ENCODE measurements at regions of chr2 and their contacts with region 1.

Region 1: GRCh38 chr2:105521205-105521604 is 122.4 kb upstream of the FHL2 start:
- DNase-seq: peak; percentile 46
- H3K4me3 ChIP-seq: no peak overlapping the region
- H3K27ac ChIP-seq: no peak overlapping the region
- H3K4me1 ChIP-seq: peaks cover 0 to 15% of the 10 kb centered on the region in 2 experiments; a peak in 1 of 4 replicates
- H3K27me3 ChIP-seq: no peaks in the 10 kb centered on the region
- CTCF ChIP-seq: peak; percentile 74
- EP300 ChIP-seq: no peak
- RAD21 ChIP-seq: peak; percentile 88

Region 2: DNA sequence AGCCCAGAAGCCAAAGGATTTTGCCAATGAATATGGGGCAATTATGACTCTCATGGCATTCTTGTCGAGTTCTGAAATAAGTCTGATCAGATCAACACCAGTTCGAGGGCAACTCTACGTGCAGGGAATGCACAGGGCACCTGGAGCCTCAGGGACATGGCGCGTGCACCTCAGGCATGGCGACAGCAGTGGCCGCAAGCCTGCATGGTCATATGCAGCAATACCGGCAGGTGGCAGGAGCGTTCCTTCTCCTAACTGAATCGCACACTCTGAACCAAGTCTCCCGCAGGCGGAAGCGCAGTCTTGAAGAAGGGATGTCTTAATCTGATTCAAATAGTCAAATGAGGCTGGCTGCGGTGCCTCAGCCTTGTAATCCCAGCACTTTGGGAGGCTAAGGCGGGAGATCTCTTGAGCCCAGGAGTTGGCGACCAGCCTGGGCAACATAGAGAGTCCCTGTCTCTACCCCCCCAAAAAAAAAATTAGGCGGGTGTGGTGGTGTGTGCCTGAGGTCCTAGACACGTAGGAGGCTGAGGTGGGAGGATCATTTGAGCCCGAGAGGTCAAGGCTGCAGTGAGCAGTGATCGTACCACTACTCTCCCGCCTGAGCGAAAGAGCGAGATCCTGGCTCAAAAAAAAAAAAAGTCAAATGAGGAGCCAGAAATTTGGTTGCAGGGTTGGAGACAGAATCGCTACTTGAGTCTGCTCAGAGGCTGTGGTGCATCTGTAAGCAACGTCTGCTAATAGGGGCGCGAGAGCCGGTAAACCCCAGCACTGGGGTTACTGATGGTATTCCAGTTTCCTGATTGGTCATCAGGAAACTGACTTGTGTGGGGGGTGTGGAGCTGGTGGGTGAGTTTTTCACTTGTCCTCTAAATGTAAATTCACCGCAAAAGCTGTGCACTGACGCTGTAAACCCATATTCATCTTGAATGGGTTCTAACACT is 151.2 kb before region 1 on chr2:
- CTCF ChIA-PET with region 1: interaction called, 129 read pairs
- POLR2A ChIA-PET with region 1: no interaction called
- DNase-seq: peak; percentile 75
- H3K4me3 ChIP-seq: no peak overlapping the region
- H3K27ac ChIP-seq: no peak overlapping the region
- H3K4me1 ChIP-seq: peaks cover 0 to 4% of the 10 kb centered on the region in 2 experiments; a peak in 1 of 4 replicates
- H3K27me3 ChIP-seq: no peaks in the 10 kb centered on the region
- CTCF ChIP-seq: peak; percentile 84
- EP300 ChIP-seq: no peak
- RAD21 ChIP-seq: peak; percentile 98

Region 3: DNA sequence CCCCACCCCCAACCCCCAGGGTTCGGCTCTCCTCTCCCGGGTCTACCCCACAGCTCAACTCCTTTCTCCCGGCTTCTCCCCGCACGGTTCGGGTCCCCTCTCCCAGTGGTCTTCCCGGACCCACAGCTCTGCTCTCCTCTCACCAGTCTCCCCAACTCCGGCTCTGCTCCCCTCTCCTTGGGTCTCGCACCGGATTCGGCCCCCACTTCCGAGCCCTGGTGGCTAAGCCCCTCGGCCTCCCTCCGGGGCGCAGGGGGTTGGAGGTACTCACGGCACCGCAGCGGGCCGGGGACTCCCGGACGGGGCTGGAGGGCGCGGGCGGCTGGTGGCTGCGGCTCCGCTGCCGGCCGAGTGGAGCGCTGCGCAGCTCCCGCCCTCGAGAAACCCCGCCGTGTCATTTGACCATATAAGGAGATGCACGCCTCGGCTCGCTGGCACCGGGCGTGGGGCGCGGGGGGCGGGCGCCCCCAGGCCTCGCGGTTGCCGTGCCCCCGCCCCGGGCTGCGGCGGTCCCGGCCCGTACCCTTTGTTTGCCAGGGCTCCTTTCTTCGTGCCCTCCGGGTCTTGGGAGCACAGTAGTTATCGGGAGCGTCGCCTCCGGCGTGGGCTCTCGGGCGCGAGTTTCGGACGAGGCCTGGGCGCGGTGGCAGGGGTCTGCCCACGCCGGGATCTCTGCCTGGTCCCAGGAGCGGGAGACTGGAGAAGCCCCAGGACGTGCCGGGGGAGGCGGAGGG is 122.3 kb before region 1 on chr2 and contains the start of gene FHL2:
- CTCF ChIA-PET with region 1: interaction called, 19 read pairs
- POLR2A ChIA-PET with region 1: no interaction called
- DNase-seq: peak; percentile 94
- H3K4me3 ChIP-seq: peak within 1 kb of the TSS; percentile 89 to 95
- H3K27ac ChIP-seq: peak within 1 kb of the TSS in 1 of 2 experiments; percentile 87; a peak in 3 of 4 replicates
- H3K4me1 ChIP-seq: peaks cover 4 to 6% of the 10 kb centered on the region in 2 experiments
- H3K27me3 ChIP-seq: no peaks in the 10 kb centered on the region
- CTCF ChIP-seq: peak; percentile 48
- EP300 ChIP-seq: no peak
- RAD21 ChIP-seq: peak; percentile 20; the same call in 1 of the 2 replicates
- polyA plus RNA-seq, gene FHL2: 31.7 and 33.1 TPM in 2 replicates

Region 4: GRCh38 chr2:105438104-105438929 is 82.9 kb before region 1 on chr2:
- CTCF ChIA-PET with region 1: interaction called, 10 read pairs
- POLR2A ChIA-PET with region 1: interaction called, 12 read pairs
- DNase-seq: peak; percentile 83
- H3K4me3 ChIP-seq: peak overlapping the region; percentile 11 to 17; a peak in 2 of 4 replicates
- H3K27ac ChIP-seq: peak overlapping the region in 1 of 2 experiments; percentile 95; a peak in 2 of 4 replicates
- H3K4me1 ChIP-seq: peaks cover 0 to 17% of the 10 kb centered on the region in 2 experiments; a peak in 2 of 4 replicates
- H3K27me3 ChIP-seq: 0 out of 2 replicates have a peak, but pooled peaks cover 4% of the 10 kb centered on the region
- CTCF ChIP-seq: no peak
- EP300 ChIP-seq: peak in 1 of 2 experiments; percentile 83; a peak in 1 of 4 replicates
- RAD21 ChIP-seq: no peak

Region 5: DNA sequence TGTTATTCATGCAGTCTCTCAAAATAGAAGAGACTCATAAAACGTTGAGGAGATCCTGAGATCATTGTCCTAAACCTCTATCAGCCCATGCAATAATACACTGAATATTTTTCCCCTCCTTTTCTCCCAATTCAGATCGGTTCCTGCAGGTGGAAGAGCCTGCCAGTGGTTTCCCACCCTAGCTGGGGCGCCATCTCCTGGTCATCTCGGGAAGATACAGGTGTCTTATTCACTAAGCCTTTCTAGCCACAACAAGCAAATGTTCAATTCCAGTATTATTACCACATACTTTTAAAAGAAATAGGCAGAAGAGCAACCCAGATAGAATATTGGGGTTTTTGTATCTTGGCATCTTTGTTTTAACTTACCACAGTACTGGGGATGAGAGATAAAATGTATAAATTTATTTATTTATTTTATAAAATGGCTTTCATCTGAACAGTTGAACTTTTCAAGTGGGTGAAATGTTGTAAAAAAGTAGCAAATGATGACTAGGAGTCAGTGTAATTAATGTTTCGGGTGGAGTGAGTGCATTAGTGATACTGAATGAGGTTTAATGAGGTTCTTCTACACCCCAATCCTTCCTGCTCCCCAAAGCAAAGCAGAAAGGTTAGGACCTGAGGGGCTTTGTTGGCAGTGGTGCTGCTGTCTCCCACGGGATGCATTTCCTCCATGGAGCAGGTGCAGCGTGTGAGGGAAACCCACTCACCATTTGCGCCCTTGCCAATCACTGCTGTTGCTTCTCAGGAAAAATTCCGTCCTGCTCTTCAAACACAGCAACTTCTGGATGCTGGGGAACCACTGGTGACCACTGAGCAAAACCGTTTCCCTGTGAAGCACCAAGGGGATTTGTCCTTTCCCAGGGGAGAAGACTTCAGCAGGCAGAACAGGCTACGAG is 24.8 kb after region 1 on chr2:
- CTCF ChIA-PET with region 1: interaction called, 14 read pairs
- POLR2A ChIA-PET with region 1: no interaction called
- DNase-seq: peak; percentile 75
- H3K4me3 ChIP-seq: no peak overlapping the region; a peak in 1 of 4 replicates
- H3K27ac ChIP-seq: no peak overlapping the region
- H3K4me1 ChIP-seq: no peaks in the 10 kb centered on the region; a peak in 1 of 4 replicates
- H3K27me3 ChIP-seq: peaks cover 9% of the 10 kb centered on the region; the same call in 1 of the 2 replicates
- CTCF ChIP-seq: peak; percentile 89
- EP300 ChIP-seq: no peak
- RAD21 ChIP-seq: peak; percentile 72

Region 6: DNA sequence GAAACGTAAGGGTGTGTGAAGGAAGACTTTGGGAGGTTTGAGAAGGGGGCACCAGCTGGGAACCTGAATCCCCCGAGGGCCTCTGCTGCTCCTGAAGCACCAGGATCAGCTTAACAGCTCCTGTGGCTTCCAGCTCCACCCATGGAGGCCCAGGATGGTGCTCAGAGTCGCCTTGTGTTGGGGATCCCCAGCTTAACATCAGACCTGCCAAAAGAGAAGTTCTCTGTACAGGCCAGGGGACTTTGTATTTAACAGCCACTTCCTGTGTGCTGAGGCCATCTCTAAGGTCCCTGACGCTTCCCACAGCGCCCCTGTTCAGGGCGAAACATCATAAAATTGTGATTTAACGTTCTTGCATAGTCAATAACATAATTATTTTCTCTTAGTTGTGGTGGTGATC is 301.0 kb after region 1 on chr2:
- CTCF ChIA-PET with region 1: no interaction called
- POLR2A ChIA-PET with region 1: no interaction called
- DNase-seq: no peak
- H3K4me3 ChIP-seq: no peak overlapping the region
- H3K27ac ChIP-seq: no peak overlapping the region
- H3K4me1 ChIP-seq: peaks cover 0 to 6% of the 10 kb centered on the region in 2 experiments; a peak in 1 of 4 replicates
- H3K27me3 ChIP-seq: no peaks in the 10 kb centered on the region
- CTCF ChIP-seq: no peak
- EP300 ChIP-seq: no peak
- RAD21 ChIP-seq: no peak